ENCODE measurements at regions of chr10 and their contacts with region 1.

Region 1: DNA sequence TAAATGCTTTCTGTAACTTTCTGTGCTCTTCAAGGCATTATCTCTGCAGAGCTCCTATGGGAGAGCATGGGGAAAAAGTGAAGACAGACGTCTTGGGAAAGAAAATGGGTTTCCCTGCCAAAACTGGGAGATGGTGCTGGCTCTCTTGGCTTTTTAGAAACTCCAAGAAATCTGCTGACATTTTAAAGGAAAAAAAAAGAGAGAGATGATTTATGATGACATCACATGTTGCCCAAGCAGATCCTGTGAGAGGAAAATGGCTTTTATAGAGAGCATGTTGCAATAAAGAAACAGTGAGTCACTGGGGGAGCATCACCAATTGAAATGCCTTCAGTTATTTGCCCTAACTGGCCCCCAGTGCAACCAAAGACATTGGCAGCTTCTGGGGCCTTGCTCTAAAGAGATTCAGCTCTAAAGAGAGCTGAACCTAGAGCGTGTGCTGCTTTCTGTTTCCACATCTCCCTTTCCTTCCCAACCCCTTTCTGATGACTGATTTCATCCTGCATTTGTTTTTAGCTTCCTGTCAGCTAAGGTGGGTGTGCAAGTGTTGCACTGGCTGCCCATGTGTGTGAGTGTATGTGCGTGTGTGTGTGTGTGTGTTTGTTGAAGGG is 37.7 kb downstream of the LRMDA start:
- DNase-seq: peak; percentile 100
- ATAC-seq: peak; percentile 88
- H3K4me3 ChIP-seq: no peak overlapping the region
- H3K27ac ChIP-seq: peak overlapping the region; percentile 54
- H3K4me1 ChIP-seq: peaks cover 25% of the 10 kb centered on the region
- H3K27me3 ChIP-seq: peaks cover 3% of the 10 kb centered on the region; the same call in 1 of the 2 replicates
- CTCF ChIP-seq: no peak

Region 2: GRCh38 chr10:75417522-75417927 is 51.6 kb before region 1 on chr10:
- CTCF ChIA-PET with region 1: no interaction called
- POLR2A ChIA-PET with region 1: no interaction called
- intact Hi-C with region 1: loop called (anchors 5 kb)
- DNase-seq: peak; percentile 69
- ATAC-seq: peak; percentile 80
- H3K4me3 ChIP-seq: no peak overlapping the region
- H3K27ac ChIP-seq: no peak overlapping the region
- H3K4me1 ChIP-seq: peaks cover 11% of the 10 kb centered on the region
- H3K27me3 ChIP-seq: peaks cover 15% of the 10 kb centered on the region; the same call in 1 of the 2 replicates
- CTCF ChIP-seq: no peak

Region 3: GRCh38 chr10:75736889-75737579 is 267.9 kb after region 1 on chr10:
- CTCF ChIA-PET with region 1: no interaction called
- POLR2A ChIA-PET with region 1: interaction called, 10 read pairs
- intact Hi-C with region 1: no loop called
- DNase-seq: no peak
- ATAC-seq: no peak
- H3K4me3 ChIP-seq: no peak overlapping the region
- H3K27ac ChIP-seq: no peak overlapping the region
- H3K4me1 ChIP-seq: no peaks in the 10 kb centered on the region
- H3K27me3 ChIP-seq: peaks cover 66% of the 10 kb centered on the region
- CTCF ChIP-seq: no peak

Measured in PC-3 (cell line).